Psoas muscle (tissue), 8 donors: ENCODE measurements at regions of chr2 and their contacts with region 1.

Region 1: GRCh38 chr2:56183643-56184499 is at the start of gene CCDC85A:
- DNase-seq: peak; percentile 86 to 92
- ATAC-seq: peak; percentile 93 to 97 (median 95)
- H3K4me3 ChIP-seq: peak within 1 kb of the TSS; percentile 76
- H3K27ac ChIP-seq: no peak within 1 kb of the TSS
- H3K4me1 ChIP-seq: no peaks in the 10 kb centered on the region
- H3K27me3 ChIP-seq: peaks cover 0 to 27% (median 9%) of the 10 kb centered on the region in 3 donors
- CTCF ChIP-seq: peak; percentile 94
- total RNA-seq, gene CCDC85A: 1.8 to 5.6 (median 2.9) TPM

Region 2: DNA sequence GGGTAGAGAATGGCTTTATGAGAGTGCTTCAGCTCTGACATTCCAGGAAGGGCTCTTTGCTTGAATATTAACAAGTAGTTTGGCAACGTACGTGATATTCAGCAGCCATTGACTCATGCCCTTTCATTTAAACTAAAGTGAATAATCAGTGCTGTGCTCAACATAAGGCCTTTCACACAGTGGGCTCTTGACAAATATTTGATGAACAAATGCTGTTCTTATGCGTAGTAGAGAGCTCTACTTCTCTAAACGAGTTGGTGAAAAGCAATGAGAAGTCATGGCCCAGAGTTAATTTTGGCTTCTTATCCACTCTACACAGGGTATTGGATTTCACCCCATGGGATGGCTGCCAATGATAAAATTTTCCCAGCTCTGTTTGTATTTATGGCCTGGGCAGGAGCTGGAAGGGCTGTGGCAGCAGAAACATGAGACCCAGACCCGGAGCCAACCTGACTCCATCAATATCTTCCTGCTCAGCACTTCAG is 338.8 kb after region 1 on chr2:
- intact Hi-C with region 1: loop called in 1 of 2 experiments (anchors 10 kb)
- DNase-seq: peak; percentile 11 to 41
- ATAC-seq: peak; percentile 91 to 98 (median 95)
- H3K4me3 ChIP-seq: no peak overlapping the region
- H3K27ac ChIP-seq: peak overlapping the region; percentile 58
- H3K4me1 ChIP-seq: no peaks in the 10 kb centered on the region
- H3K27me3 ChIP-seq: no peaks in the 10 kb centered on the region
- CTCF ChIP-seq: no peak

Region 3: GRCh38 chr2:56749152-56749752 is 565.4 kb after region 1 on chr2:
- intact Hi-C with region 1: loop called (anchors 2 to 5 kb)
- DNase-seq: no peak
- ATAC-seq: peak in 2 of 4 donors; percentile 41 to 63
- H3K4me3 ChIP-seq: no peak overlapping the region
- H3K27ac ChIP-seq: no peak overlapping the region
- H3K4me1 ChIP-seq: no peaks in the 10 kb centered on the region
- H3K27me3 ChIP-seq: no peaks in the 10 kb centered on the region
- CTCF ChIP-seq: peak; percentile 60

Region 4: GRCh38 chr2:57516698-57517340 is 1332.9 kb after region 1 on chr2:
- intact Hi-C with region 1: loop called (anchors 2 to 5 kb)
- DNase-seq: no peak
- ATAC-seq: peak in 3 of 4 donors; percentile 61 to 74 (median 69)
- H3K4me3 ChIP-seq: no peak overlapping the region
- H3K27ac ChIP-seq: no peak overlapping the region
- H3K4me1 ChIP-seq: no peaks in the 10 kb centered on the region
- H3K27me3 ChIP-seq: no peaks in the 10 kb centered on the region
- CTCF ChIP-seq: peak; percentile 60